Activated CD8-positive, alpha-beta memory T cell treated with anti-CD3 and anti-CD28 coated beads, Interleukin-2, amount 10 ng/mL, durations not matched to agents 7 days and 5 days (primary cell): ENCODE measurements at regions of chr11 and their contacts with region 1.

Region 1: DNA sequence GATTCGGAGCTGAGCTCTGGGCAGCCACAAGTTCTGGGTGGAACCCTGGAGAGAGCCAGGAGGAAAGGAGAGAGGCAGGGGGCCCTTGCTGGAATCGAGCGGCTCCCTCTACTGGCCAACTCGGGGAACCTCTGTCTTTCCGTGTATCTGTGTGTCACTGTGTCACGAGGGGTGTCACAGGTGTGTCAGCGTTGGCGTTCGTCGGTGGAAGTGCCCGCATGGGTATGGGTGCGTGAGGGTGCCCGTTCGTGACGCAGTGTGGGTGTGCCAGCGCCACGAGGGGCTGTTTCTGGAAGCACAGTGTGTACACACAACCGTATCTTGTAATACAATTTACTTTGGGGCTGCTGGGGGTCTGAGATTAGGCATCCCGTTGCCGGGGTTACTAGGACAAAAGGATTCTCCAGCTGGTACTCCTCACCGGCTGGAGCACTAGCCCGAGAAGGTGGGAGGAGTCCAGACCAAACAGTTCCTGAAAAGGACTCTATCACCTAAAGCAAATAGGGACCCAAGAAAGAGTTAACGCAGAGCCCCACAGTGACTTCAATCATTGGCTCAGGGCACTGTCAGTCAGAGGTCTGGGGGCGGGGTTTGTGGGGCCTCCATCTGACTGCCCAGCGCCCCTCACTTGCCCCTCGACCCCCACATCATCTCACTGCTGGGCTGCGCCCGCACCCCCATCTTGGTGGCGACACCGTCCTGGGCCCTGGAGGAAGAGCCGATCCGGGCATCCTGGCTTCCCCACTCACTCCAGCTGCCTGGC is 2.6 kb upstream of the BCL9L start:
- DNase-seq: peak; percentile 94
- ATAC-seq: peak; percentile 60
- H3K4me3 Mint-ChIP-seq: peak overlapping the region; percentile 92
- H3K27ac Mint-ChIP-seq: peak overlapping the region; percentile 98
- H3K4me1 Mint-ChIP-seq: peaks cover 44% of the 10 kb centered on the region
- H3K27me3 Mint-ChIP-seq: no peaks in the 10 kb centered on the region

Region 2: GRCh38 chr11:118530408-118531339 is 397.6 kb before region 1 on chr11 and contains the start of gene TMEM25:
- CTCF ChIA-PET with region 1: no interaction called
- DNase-seq: peak; percentile 80
- ATAC-seq: peak; percentile 90
- H3K4me3 Mint-ChIP-seq: peak within 1 kb of the TSS; percentile 79
- H3K27ac Mint-ChIP-seq: peak within 1 kb of the TSS; percentile 58
- H3K4me1 Mint-ChIP-seq: peaks cover 23% of the 10 kb centered on the region
- H3K27me3 Mint-ChIP-seq: no peaks in the 10 kb centered on the region
- total RNA-seq, gene TMEM25: 8.4 to 8.6 TPM

Region 3: GRCh38 chr11:118939953-118940598 is 11.8 kb after region 1 on chr11:
- CTCF ChIA-PET with region 1: interaction called, 18 read pairs
- DNase-seq: peak; percentile 69
- ATAC-seq: peak; percentile 82
- H3K4me3 Mint-ChIP-seq: no peak overlapping the region
- H3K27ac Mint-ChIP-seq: peak overlapping the region; percentile 32
- H3K4me1 Mint-ChIP-seq: peaks cover 28% of the 10 kb centered on the region
- H3K27me3 Mint-ChIP-seq: peaks cover 8% of the 10 kb centered on the region